IMR-90 (cell line): ENCODE measurements at regions of chr17 and their contacts with region 1.

Region 1: DNA sequence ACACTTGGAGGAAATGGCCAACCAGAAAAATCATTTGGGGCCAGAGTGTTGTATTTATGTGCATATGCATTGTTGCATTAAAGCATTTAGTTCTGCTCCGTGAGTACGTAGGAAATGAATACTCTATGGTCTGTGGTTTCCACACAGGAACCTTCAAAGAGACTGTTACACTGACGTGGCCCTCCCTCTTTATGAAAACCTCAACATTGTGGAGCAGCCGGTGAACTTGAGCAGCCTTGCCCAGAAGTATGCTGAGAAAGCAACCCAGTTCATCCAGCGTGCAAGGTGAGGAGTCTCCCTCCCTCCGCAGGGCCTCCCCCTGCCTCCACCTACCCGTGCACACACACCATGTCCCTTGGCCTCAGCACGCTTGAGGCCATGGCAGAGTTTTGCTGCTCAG is 65.2 kb downstream of the ARSG start:
- DNase-seq: no peak
- ATAC-seq: no peak
- H3K4me3 ChIP-seq: no peak overlapping the region
- H3K27ac ChIP-seq: no peak overlapping the region
- H3K4me1 ChIP-seq: peaks cover 10% of the 10 kb centered on the region
- H3K27me3 ChIP-seq: no peaks in the 10 kb centered on the region
- CTCF ChIP-seq: no peak
- POLR2A ChIP-seq: no peak
- RAD21 ChIP-seq: no peak

Region 2: GRCh38 chr17:68383443-68384321 is 27.2 kb after region 1 on chr17:
- CTCF ChIA-PET with region 1: no interaction called
- POLR2A ChIA-PET with region 1: interaction called, 10 read pairs
- dilution Hi-C with region 1: no loop called
- in situ Hi-C with region 1: no loop called
- intact Hi-C with region 1: loop called (anchors 2 kb)
- DNase-seq: peak; percentile 94
- ATAC-seq: peak; percentile 55
- H3K4me3 ChIP-seq: no peak overlapping the region
- H3K27ac ChIP-seq: peak overlapping the region; percentile 94
- H3K4me1 ChIP-seq: peaks cover 25% of the 10 kb centered on the region
- H3K27me3 ChIP-seq: no peaks in the 10 kb centered on the region
- CTCF ChIP-seq: no peak
- POLR2A ChIP-seq: peak; percentile 55; the same call in 1 of the 2 replicates
- RAD21 ChIP-seq: no peak; the same call in 1 of the 2 replicates

Region 3: DNA sequence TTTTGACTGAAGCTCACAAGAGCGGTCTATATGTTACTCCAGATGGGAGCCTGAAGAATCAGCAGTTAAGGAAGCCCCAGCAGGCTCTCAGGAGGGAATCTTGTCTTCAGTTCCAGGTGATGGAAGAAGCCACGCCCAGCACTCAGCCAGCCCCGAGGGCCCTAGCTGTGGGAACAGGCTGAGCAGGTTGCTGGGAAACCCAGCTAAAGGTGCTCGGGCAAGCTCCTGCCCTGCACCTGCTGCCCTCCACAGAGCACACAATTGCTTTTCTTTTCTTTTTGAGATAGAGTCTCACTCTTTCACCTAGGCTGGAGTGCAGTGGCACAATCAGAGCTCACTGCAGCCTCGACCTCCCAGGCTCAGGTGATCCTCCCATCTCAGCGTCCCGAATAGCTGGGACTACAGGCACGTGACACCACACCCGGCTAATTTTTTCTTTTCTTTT is 68.4 kb after region 1 on chr17:
- CTCF ChIA-PET with region 1: no interaction called
- POLR2A ChIA-PET with region 1: no interaction called
- dilution Hi-C with region 1: no loop called
- in situ Hi-C with region 1: no loop called
- intact Hi-C with region 1: no loop called
- DNase-seq: no peak
- ATAC-seq: no peak
- H3K4me3 ChIP-seq: no peak overlapping the region
- H3K27ac ChIP-seq: no peak overlapping the region
- H3K4me1 ChIP-seq: no peaks in the 10 kb centered on the region
- H3K27me3 ChIP-seq: no peaks in the 10 kb centered on the region
- CTCF ChIP-seq: no peak
- POLR2A ChIP-seq: no peak
- RAD21 ChIP-seq: no peak